Heart left ventricle (tissue), 16 donors: ENCODE measurements at regions of chr16 and their contacts with region 1.

Region 1: DNA sequence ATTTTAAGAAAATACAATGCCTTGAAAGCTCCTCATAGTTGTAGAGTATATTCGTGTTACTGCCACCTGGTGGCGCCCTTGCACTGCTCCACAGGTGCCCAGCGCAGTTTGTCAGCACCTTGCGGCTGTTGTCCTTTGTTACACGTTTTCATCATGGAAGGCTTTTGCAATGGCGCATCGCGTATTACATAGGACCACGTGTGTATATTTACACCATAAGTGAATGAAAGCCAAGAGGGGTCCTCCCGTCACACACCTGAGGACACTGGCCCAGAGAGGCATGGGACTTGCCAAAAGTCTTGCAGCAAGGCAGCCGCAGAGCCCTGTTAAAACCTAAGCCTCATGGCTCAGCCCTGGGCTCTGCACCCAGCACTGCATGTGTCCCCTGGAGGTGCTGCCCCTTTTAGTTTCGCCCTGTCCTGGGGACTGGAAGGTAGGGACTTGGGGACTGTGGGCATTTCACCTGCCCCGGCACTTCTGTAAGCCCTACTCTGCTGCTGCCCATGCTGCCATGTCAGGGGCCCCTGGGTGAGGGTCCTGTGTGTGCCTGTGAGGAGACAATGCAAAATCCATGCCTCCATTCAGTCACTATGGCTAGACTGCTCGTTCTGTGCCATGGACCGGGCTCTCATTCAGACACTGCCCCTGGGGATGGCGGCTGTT is 24.3 kb downstream of the POLR3E start:
- DNase-seq: peak in 3 of 5 donors; percentile 47 to 68 (median 59)
- ATAC-seq: peak; percentile 25 to 74 (median 52)
- H3K4me3 ChIP-seq: no peak overlapping the region
- H3K27ac ChIP-seq: no peak overlapping the region
- H3K4me1 ChIP-seq: peaks cover 0 to 8% (median 1%) of the 10 kb centered on the region in 12 donors
- H3K27me3 ChIP-seq: no peaks in the 10 kb centered on the region
- CTCF ChIP-seq: peak; percentile 85 to 97 (median 88)
- POLR2A ChIP-seq: no peak

Region 2: DNA sequence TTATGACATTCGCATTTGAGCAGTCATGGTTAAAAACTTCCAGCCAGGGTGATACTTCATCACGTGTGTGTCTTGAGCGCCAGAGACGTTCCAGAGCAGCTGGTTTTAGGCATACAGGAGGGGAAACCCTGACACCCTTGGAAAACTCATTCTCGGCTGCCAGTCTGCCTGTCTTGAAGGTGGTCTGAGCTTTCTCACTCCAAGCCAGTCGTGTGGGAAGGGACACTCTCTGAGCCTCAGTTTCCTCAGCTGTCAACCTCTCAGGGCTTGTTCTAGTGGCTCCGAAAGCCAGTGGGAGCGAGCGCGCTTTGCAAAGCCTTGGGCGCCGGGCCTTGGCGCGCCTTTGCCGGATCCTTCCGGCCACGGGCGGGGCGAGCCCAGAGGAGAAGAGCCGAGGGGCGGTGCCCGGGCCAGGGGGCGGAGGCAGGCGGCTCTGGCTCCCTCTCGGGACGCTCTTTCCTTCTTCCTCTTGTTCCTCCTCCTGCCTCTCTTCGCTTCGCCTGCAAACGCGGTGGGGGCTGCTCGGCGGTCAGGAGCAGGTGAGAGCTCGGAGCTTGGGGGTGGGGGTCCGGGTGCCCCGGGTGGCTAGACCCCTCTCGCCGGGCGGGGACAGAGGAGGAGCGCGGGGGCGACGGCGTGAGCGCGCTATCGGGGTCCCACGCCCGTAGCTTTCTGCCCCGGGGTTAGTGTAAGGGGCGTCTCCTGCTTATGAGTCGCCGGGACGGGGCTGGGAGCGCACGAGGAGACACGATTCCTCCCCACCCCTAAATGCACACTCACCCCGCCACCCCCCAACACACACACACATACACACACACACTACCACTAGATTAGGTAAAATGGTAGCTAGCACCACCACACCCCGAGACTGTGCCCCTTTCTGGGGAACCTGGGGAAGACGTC is 1163.0 kb before region 1 on chr16 and contains the start of gene LDAF1:
- intact Hi-C with region 1: loop called in 2 of 10 experiments (anchors 10 kb)
- DNase-seq: peak; percentile 85 to 93 (median 88)
- ATAC-seq: peak; percentile 81 to 93 (median 90)
- H3K4me3 ChIP-seq: peak within 1 kb of the TSS; percentile 74 to 95 (median 88)
- H3K27ac ChIP-seq: peak within 1 kb of the TSS; percentile 72 to 94 (median 88)
- H3K4me1 ChIP-seq: peaks cover 17 to 59% (median 40%) of the 10 kb centered on the region in 12 donors
- H3K27me3 ChIP-seq: no peaks in the 10 kb centered on the region
- CTCF ChIP-seq: peak in 3 of 12 donors; percentile 12 to 14 (median 13)
- POLR2A ChIP-seq: peak in 1 of 2 donors; percentile 69
- total RNA-seq, gene LDAF1: 87.0 to 334 (median 162) TPM

Region 3: DNA sequence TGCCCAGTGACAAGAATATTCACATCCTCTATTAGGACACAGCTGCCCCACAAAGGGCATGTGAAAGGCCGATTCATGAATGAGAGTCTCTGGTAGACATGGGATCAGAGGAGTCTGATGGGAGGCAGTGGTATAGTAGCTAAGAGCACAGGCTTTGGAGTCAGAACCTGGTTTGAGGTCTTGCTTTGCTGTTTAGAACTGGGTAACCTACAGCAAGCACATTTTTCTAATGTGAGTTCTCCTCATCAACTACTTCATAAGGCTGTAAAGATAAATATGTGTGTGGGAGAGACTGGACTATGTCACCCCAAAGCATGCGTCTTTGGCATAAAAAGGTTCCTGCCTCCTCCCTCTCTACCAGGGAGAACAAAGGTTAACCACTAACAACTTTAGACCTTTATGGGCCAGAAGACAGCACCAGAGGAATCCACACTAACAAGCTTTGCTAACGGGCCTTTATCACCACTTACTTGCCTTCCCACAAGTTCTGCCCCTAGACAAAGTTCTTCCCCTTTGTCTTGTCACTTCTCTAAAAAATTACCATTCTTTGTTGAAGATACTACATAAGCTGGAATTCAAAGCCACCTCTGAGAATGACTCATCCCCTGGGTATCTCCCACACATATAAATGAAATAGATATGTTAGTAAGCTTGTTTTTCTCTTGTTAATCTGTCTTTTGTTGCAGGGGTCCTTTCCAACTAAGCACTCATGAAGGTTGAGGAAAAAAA is 31.9 kb after region 1 on chr16:
- intact Hi-C with region 1: loop called in 1 of 10 experiments (anchors 5 kb)
- DNase-seq: no peak
- ATAC-seq: peak in 3 of 4 donors; percentile 27 to 56 (median 32)
- H3K4me3 ChIP-seq: no peak overlapping the region
- H3K27ac ChIP-seq: peak overlapping the region in 2 of 12 donors; percentile 45 to 69
- H3K4me1 ChIP-seq: peaks cover 0 to 58% (median 5%) of the 10 kb centered on the region in 12 donors
- H3K27me3 ChIP-seq: no peaks in the 10 kb centered on the region
- CTCF ChIP-seq: no peak
- POLR2A ChIP-seq: no peak

Region 4: GRCh38 chr16:22374311-22375116 is 53.0 kb after region 1 on chr16 and contains the start of gene CDR2:
- intact Hi-C with region 1: loop called in 2 of 10 experiments (anchors 5 to 10 kb)
- DNase-seq: peak; percentile 99
- ATAC-seq: peak; percentile 97 to 98 (median 98)
- H3K4me3 ChIP-seq: peak within 1 kb of the TSS; percentile 64 to 99 (median 90)
- H3K27ac ChIP-seq: peak within 1 kb of the TSS; percentile 56 to 91 (median 80)
- H3K4me1 ChIP-seq: peaks cover 0 to 50% (median 23%) of the 10 kb centered on the region in 12 donors
- H3K27me3 ChIP-seq: no peaks in the 10 kb centered on the region
- CTCF ChIP-seq: no peak
- POLR2A ChIP-seq: peak; percentile 72 to 93
- total RNA-seq, gene CDR2: 4.7 to 12.4 (median 6.0) TPM